Activated T-helper 1 cell treated with anti-CD3 and anti-CD28 coated beads, Interleukin-12 subunit alpha, Interleukin-12 subunit beta, Interleukin-2, Interleukin-4 antibody, amounts not matched to agents 30 ng/mL and 10 ng/mL and 1 ng/mL, durations not matched to agents 14 hours and 24 hours and 36 hours (primary cell): ENCODE measurements at regions of chr3 and their contacts with region 1.

Region 1: GRCh38 chr3:121545574-121546455 is at the start of gene POLQ:
- DNase-seq: peak; percentile 83
- H3K4me3 Mint-ChIP-seq: peak within 1 kb of the TSS; percentile 89
- H3K27ac Mint-ChIP-seq: peak within 1 kb of the TSS; percentile 88
- H3K4me1 Mint-ChIP-seq: peaks cover 32% of the 10 kb centered on the region
- H3K27me3 Mint-ChIP-seq: peaks cover 2% of the 10 kb centered on the region
- total RNA-seq, gene POLQ: 29.0 and 30.1 TPM in 2 replicates

Region 2: GRCh38 chr3:122092460-122093165 is 546.8 kb after region 1 on chr3:
- intact Hi-C with region 1: loop called (anchors 1 kb)
- DNase-seq: peak; percentile 55
- H3K4me3 Mint-ChIP-seq: peak overlapping the region; percentile 32
- H3K27ac Mint-ChIP-seq: peak overlapping the region; percentile 90
- H3K4me1 Mint-ChIP-seq: peaks cover 40% of the 10 kb centered on the region
- H3K27me3 Mint-ChIP-seq: no peaks in the 10 kb centered on the region

Region 3: DNA sequence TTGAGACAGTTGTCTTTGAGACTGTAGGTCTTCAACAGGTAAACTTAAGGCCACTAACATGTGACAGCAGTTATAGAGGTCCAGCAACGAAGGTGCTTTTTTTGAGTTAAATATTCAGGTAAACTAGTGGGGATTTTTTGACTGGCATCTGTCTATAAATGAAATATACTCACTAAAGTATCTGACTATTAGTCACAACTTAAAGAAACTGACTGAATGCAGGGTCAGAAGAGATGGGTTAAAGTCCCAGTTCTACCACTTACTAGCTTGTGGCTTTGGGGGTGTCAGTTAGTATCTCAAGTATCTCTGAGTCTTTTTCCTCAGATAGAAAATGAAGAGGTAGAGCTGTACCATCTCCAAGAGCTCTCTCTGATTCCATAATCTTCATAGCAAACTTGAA is 819.3 kb after region 1 on chr3:
- intact Hi-C with region 1: loop called (anchors 1 kb)
- DNase-seq: no peak
- H3K4me3 Mint-ChIP-seq: peak overlapping the region; percentile 42
- H3K27ac Mint-ChIP-seq: peak overlapping the region; percentile 91
- H3K4me1 Mint-ChIP-seq: peaks cover 47% of the 10 kb centered on the region
- H3K27me3 Mint-ChIP-seq: no peaks in the 10 kb centered on the region

Region 4: GRCh38 chr3:122533931-122534334 is 988.1 kb after region 1 on chr3:
- intact Hi-C with region 1: loop called (anchors 5 kb)
- DNase-seq: peak; percentile 46
- H3K4me3 Mint-ChIP-seq: no peak overlapping the region
- H3K27ac Mint-ChIP-seq: peak overlapping the region; percentile 80
- H3K4me1 Mint-ChIP-seq: peaks cover 60% of the 10 kb centered on the region
- H3K27me3 Mint-ChIP-seq: no peaks in the 10 kb centered on the region

Region 5: DNA sequence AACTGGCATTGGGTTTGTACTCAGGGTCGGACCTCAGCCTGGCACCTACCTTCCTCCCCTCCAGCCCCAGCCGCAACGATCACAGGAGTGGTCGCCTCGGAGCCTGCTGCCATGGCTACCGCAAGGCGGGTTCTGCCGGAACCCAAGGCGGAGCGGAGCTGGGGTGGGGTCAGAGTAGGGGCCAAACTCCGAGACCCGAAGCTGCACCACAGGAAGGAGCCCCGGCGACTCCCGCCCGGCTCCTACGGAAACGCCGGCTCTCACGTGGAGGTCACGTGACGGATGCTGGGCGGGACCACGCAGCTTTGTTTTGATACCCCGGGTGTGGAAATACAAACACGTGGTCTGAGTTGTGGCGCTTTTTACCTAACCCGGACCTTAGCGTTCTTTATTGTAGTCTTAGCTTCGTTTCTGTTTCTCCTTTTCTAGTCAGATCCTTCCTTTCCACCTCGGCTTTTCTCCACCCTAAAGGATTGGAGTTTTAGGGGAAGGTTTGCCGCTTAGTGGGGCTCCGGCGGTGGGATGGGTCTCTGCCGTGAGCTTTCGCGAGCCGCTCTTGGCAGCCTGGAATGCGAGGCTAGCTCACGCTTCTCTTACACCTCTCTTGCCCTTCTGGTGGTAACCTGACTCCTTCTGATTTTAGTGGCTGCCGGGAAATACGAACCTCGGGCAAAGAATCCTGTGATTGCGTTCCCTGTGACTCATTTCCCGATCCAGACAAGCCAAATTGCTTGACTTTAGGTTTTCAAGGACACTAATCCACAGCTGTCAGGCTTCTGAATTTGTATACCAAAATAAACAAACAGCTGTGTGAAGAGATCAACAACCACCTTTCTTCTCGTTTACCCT is 1248.0 kb after region 1 on chr3 and contains the start of gene HSPBAP1:
- intact Hi-C with region 1: loop called (anchors 5 kb)
- DNase-seq: peak; percentile 86
- H3K4me3 Mint-ChIP-seq: peak within 1 kb of the TSS; percentile 89
- H3K27ac Mint-ChIP-seq: peak within 1 kb of the TSS; percentile 79
- H3K4me1 Mint-ChIP-seq: peaks cover 39% of the 10 kb centered on the region
- H3K27me3 Mint-ChIP-seq: no peaks in the 10 kb centered on the region
- total RNA-seq, gene HSPBAP1: 8.1 and 8.9 TPM in 2 replicates